CD4-positive, alpha-beta T cell (primary cell): ENCODE measurements at regions of chr14 and their contacts with region 1.

Region 1: DNA sequence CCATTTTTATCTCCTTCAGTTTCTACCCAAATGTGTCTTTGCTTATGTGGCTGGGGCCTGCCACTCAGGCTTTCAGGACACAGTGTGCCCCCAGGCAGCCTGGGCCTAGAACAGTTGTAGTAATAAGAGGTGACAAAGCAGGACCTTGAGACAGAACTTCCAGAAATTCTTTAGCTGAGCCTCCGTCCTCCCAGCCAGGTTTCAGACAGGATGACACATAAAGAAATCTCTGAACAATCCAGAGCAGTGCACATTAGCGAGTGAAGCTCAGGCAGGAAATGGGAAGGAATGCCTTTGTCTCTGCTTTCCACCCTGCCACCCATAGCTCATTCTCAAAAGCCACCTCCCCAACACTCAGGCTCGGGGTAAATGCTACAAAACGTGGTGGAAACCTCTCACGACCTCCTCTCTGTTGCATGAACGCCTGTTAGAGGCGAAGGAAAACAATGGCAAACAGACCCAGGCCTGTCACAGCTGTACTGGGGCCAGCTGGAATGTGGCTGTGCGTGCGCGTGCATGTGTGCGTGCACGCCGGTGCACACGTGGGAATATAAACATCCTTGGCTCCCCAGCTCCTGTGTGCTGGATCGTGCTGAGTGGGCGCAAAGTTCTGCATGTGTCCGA is 286.7 kb downstream of the ZFP36L1 start:
- DNase-seq: peak in 2 of 14 experiments; percentile 25 to 45
- ATAC-seq: no peak
- H3K4me3 ChIP-seq: peak overlapping the region; percentile 20
- H3K4me3 Mint-ChIP-seq: peak overlapping the region; percentile 50
- H3K27ac ChIP-seq: peak overlapping the region; percentile 64 to 90
- H3K27ac Mint-ChIP-seq: peak overlapping the region; percentile 95
- H3K4me1 ChIP-seq: peaks cover 64% of the 10 kb centered on the region
- H3K4me1 Mint-ChIP-seq: peaks cover 82% of the 10 kb centered on the region
- H3K27me3 ChIP-seq: no peaks in the 10 kb centered on the region
- H3K27me3 Mint-ChIP-seq: no peaks in the 10 kb centered on the region
- CTCF ChIP-seq: no peak

Region 2: GRCh38 chr14:68377459-68377858 is 128.7 kb before region 1 on chr14:
- CTCF ChIA-PET with region 1: no interaction called
- POLR2A ChIA-PET with region 1: interaction called, 11 read pairs
- intact Hi-C with region 1: no loop called
- DNase-seq: peak in 4 of 14 experiments; percentile 26 to 58 (median 52)
- ATAC-seq: no peak
- H3K4me3 ChIP-seq: no peak overlapping the region
- H3K4me3 Mint-ChIP-seq: peak overlapping the region; percentile 27
- H3K27ac ChIP-seq: peak overlapping the region; percentile 11 to 68
- H3K27ac Mint-ChIP-seq: peak overlapping the region; percentile 67
- H3K4me1 ChIP-seq: peaks cover 28% of the 10 kb centered on the region
- H3K4me1 Mint-ChIP-seq: peaks cover 81% of the 10 kb centered on the region
- H3K27me3 ChIP-seq: no peaks in the 10 kb centered on the region
- H3K27me3 Mint-ChIP-seq: no peaks in the 10 kb centered on the region
- CTCF ChIP-seq: no peak

Region 3: GRCh38 chr14:68495101-68496039 is 10.8 kb before region 1 on chr14:
- CTCF ChIA-PET with region 1: interaction called, 3 read pairs
- POLR2A ChIA-PET with region 1: interaction called, 41 read pairs
- intact Hi-C with region 1: no loop called
- DNase-seq: peak in 10 of 14 experiments; percentile 15 to 64 (median 28)
- ATAC-seq: peak; percentile 88
- H3K4me3 ChIP-seq: no peak overlapping the region
- H3K4me3 Mint-ChIP-seq: peak overlapping the region; percentile 12
- H3K27ac ChIP-seq: no peak overlapping the region
- H3K27ac Mint-ChIP-seq: peak overlapping the region; percentile 74
- H3K4me1 ChIP-seq: peaks cover 20% of the 10 kb centered on the region
- H3K4me1 Mint-ChIP-seq: peaks cover 57% of the 10 kb centered on the region
- H3K27me3 ChIP-seq: no peaks in the 10 kb centered on the region
- H3K27me3 Mint-ChIP-seq: no peaks in the 10 kb centered on the region
- CTCF ChIP-seq: no peak

Region 4: GRCh38 chr14:68563246-68564131 is 57.4 kb after region 1 on chr14:
- CTCF ChIA-PET with region 1: no interaction called
- POLR2A ChIA-PET with region 1: interaction called, 20 read pairs
- intact Hi-C with region 1: loop called in 1 of 2 experiments (anchors 10 kb)
- DNase-seq: no peak
- ATAC-seq: no peak
- H3K4me3 ChIP-seq: no peak overlapping the region
- H3K4me3 Mint-ChIP-seq: peak overlapping the region; percentile 31
- H3K27ac ChIP-seq: no peak overlapping the region
- H3K27ac Mint-ChIP-seq: peak overlapping the region; percentile 50
- H3K4me1 ChIP-seq: peaks cover 35% of the 10 kb centered on the region
- H3K4me1 Mint-ChIP-seq: peaks cover 53% of the 10 kb centered on the region
- H3K27me3 ChIP-seq: no peaks in the 10 kb centered on the region
- H3K27me3 Mint-ChIP-seq: no peaks in the 10 kb centered on the region
- CTCF ChIP-seq: no peak

Region 5: DNA sequence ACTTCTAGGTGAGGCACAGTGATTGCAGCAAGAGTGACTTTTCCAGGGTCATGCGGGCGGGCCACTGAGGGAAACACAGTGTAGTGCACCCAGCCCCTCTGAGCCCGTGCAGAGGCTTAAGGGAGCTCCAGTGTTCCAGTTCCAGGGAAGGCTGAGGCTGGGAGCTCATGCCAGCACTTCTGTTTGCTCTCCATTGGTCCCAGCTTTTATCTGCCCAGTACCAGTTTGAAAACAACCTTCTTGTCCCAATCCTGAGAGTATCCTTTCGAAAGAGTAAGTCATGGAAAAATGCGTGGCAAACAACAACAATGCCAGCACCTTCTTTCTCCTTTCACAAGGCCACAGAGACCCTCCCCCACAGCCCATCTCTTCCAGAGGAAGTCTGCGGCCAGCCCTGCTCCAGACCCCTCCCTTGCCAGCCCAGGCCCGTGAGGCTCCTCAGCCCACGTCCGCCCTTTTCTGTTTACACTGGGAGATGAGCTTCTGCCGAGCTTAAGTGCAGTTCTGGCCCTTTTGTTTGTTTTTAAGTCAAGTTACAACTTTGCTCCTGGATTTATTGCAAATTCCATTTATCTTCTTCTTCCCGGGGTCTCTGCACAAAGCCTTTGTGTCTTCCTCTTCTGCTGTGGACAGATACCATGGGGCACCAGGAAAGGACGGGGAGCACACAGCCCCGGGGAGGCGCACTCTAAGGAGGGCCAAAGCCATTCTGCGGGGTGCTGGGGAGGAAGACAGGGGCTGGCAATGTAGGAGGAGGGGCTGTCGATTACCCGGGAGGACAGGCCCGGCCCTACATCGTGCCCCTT is 101.2 kb after region 1 on chr14:
- CTCF ChIA-PET with region 1: no interaction called
- POLR2A ChIA-PET with region 1: no interaction called
- intact Hi-C with region 1: no loop called
- DNase-seq: peak in 1 of 14 experiments; percentile 26
- ATAC-seq: no peak
- H3K4me3 ChIP-seq: no peak overlapping the region
- H3K4me3 Mint-ChIP-seq: peak overlapping the region; percentile 36
- H3K27ac ChIP-seq: no peak overlapping the region
- H3K27ac Mint-ChIP-seq: peak overlapping the region; percentile 64
- H3K4me1 ChIP-seq: peaks cover 20% of the 10 kb centered on the region
- H3K4me1 Mint-ChIP-seq: peaks cover 20% of the 10 kb centered on the region
- H3K27me3 ChIP-seq: no peaks in the 10 kb centered on the region
- H3K27me3 Mint-ChIP-seq: no peaks in the 10 kb centered on the region
- CTCF ChIP-seq: no peak

Region 6: DNA sequence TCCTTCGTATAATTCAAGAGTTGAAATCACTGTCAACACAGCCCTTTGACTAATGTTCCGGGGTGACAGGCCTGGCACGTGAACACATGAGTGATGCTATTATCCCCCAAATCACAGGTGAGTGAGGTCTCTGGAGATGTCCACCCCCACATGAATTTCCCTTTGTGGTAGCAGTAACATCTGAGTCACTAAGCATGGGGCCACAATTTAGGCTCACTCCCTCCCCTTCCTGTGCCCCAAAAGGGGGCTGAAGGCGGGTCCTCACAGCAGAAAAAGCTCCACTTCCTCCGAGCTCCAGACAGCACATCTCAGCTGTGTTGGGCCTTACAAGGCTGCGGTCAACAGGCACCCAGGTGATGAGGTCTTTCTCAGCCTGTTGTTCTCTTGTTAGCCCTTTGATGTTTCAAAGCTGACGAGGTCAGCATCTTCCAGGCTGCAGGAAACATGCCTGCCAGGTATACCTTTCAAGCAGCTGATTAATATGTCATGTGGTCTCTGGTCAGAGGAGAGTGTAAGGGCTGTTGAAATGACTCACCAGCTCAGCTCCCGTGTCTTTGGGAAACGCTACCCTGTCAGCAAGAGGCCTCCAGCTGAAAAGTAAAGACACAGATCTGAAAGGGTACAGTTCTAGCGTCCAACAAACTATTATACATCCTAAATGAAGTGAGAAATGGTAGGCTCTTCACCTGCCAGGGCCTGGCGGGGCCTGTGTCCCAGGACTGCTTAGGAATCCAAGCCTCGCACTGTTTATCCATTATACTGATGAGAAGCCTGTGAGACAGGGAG is 179.5 kb after region 1 on chr14:
- CTCF ChIA-PET with region 1: interaction called, 4 read pairs
- POLR2A ChIA-PET with region 1: interaction called, 16 read pairs
- intact Hi-C with region 1: loop called in 1 of 2 experiments (anchors 2 kb)
- DNase-seq: peak; percentile 62 to 96 (median 80)
- ATAC-seq: peak; percentile 84
- H3K4me3 ChIP-seq: no peak overlapping the region
- H3K4me3 Mint-ChIP-seq: peak overlapping the region; percentile 3
- H3K27ac ChIP-seq: peak overlapping the region; percentile 62 to 87
- H3K27ac Mint-ChIP-seq: peak overlapping the region; percentile 94
- H3K4me1 ChIP-seq: peaks cover 59% of the 10 kb centered on the region
- H3K4me1 Mint-ChIP-seq: peaks cover 70% of the 10 kb centered on the region
- H3K27me3 ChIP-seq: no peaks in the 10 kb centered on the region
- H3K27me3 Mint-ChIP-seq: no peaks in the 10 kb centered on the region
- CTCF ChIP-seq: no peak

Region 7: DNA sequence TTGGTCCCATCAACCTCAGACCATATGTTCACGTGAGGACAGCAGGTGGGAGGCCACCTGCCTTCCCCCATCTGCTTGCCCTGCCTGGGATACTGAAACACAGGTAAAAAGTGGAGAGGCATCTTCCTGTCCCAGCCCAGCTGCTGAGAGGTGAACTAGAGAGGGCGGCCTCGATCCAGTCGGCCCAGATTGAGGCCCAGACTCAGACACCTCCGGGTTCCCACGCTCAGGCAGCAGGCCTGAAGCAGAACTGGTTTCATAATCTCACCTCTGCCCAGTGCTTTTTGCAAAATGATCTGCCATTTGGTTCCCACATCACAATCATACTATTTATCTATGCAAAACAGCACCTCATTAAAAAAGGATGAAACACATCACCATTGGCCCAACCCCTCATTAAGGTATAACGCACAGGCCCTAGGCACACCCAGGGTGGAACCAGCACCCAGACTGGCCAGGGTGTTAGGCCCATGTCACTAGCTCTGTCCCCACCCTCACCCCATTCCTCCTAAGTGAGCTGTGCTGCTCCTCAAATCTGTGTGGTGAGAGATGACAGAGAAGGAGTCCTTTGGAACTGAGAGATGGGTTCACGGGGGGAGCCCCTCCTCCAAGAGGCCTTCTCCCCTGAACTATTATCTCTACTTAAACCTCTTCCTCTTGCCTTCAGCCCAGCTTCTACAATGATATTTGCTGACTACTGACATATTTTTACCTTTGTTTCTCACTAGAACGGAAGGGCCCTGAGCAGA is 205.6 kb after region 1 on chr14:
- CTCF ChIA-PET with region 1: no interaction called
- POLR2A ChIA-PET with region 1: no interaction called
- intact Hi-C with region 1: no loop called
- DNase-seq: peak in 6 of 14 experiments; percentile 6 to 66 (median 44)
- ATAC-seq: peak; percentile 68
- H3K4me3 ChIP-seq: no peak overlapping the region
- H3K4me3 Mint-ChIP-seq: no peak overlapping the region
- H3K27ac ChIP-seq: peak overlapping the region; percentile 24 to 44
- H3K27ac Mint-ChIP-seq: peak overlapping the region; percentile 85
- H3K4me1 ChIP-seq: peaks cover 38% of the 10 kb centered on the region
- H3K4me1 Mint-ChIP-seq: peaks cover 47% of the 10 kb centered on the region
- H3K27me3 ChIP-seq: no peaks in the 10 kb centered on the region
- H3K27me3 Mint-ChIP-seq: no peaks in the 10 kb centered on the region
- CTCF ChIP-seq: no peak

Region 8: DNA sequence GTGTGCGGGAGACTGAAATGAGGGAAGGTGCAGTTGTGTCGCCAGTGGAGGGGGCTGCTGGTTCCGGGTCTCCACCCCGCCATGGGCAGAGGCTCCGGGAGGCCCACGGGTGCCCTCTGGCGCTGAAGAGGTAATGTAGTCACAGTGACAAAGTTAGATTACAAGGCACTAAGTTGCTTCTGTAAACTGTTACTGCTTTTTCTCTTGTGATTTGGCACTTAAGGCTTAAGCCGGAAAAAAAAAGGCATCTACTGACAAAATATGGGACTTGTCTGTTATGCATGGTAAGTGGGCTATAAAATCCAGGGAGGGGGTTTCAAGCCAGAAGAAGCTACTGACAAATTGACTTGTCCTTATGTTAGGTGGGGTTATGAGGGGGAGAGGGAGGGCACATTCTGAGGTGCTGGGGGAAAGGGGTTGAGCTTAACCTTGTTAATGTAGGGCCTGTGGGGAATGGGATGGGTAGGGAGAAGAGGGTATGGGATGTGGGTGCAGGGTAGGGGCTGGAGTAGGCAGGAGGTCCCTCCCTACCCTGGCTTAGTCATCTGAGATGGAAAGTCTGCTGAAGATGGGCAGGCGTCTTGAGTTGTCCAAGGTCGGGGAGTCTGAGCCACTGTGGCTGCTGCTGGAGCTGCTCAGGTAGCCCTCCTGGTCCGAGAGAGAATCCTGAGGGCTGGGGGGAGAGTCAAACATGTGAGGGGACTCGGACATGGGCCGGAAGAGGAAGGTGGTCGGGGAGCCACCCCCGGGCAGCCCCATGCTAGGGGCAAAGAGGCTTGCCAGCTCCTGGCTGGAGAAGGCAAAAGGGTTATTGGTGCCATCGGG is 283.1 kb after region 1 on chr14:
- CTCF ChIA-PET with region 1: interaction called, 7 read pairs
- POLR2A ChIA-PET with region 1: interaction called, 133 read pairs
- intact Hi-C with region 1: loop called (anchors 2 to 5 kb)
- DNase-seq: peak; percentile 81 to 94 (median 88)
- ATAC-seq: peak; percentile 44
- H3K4me3 ChIP-seq: peak overlapping the region; percentile 98
- H3K4me3 Mint-ChIP-seq: peak overlapping the region; percentile 92
- H3K27ac ChIP-seq: peak overlapping the region; percentile 67 to 100
- H3K27ac Mint-ChIP-seq: peak overlapping the region; percentile 99
- H3K4me1 ChIP-seq: peaks cover 58% of the 10 kb centered on the region
- H3K4me1 Mint-ChIP-seq: peaks cover 63% of the 10 kb centered on the region
- H3K27me3 ChIP-seq: no peaks in the 10 kb centered on the region
- H3K27me3 Mint-ChIP-seq: no peaks in the 10 kb centered on the region
- CTCF ChIP-seq: peak; percentile 82

Region 9: GRCh38 chr14:68816262-68816942 is 310.3 kb after region 1 on chr14:
- CTCF ChIA-PET with region 1: interaction called, 10 read pairs
- POLR2A ChIA-PET with region 1: interaction called, 35 read pairs
- intact Hi-C with region 1: no loop called
- DNase-seq: peak; percentile 80 to 94 (median 88)
- ATAC-seq: peak; percentile 62
- H3K4me3 ChIP-seq: peak overlapping the region; percentile 64
- H3K4me3 Mint-ChIP-seq: peak overlapping the region; percentile 91
- H3K27ac ChIP-seq: peak overlapping the region; percentile 92 to 93
- H3K27ac Mint-ChIP-seq: peak overlapping the region; percentile 95
- H3K4me1 ChIP-seq: peaks cover 89% of the 10 kb centered on the region
- H3K4me1 Mint-ChIP-seq: peaks cover 79% of the 10 kb centered on the region
- H3K27me3 ChIP-seq: no peaks in the 10 kb centered on the region
- H3K27me3 Mint-ChIP-seq: no peaks in the 10 kb centered on the region
- CTCF ChIP-seq: peak; percentile 96